ENCODE measurements at regions of chr12 and their contacts with region 1.

Region 1: DNA sequence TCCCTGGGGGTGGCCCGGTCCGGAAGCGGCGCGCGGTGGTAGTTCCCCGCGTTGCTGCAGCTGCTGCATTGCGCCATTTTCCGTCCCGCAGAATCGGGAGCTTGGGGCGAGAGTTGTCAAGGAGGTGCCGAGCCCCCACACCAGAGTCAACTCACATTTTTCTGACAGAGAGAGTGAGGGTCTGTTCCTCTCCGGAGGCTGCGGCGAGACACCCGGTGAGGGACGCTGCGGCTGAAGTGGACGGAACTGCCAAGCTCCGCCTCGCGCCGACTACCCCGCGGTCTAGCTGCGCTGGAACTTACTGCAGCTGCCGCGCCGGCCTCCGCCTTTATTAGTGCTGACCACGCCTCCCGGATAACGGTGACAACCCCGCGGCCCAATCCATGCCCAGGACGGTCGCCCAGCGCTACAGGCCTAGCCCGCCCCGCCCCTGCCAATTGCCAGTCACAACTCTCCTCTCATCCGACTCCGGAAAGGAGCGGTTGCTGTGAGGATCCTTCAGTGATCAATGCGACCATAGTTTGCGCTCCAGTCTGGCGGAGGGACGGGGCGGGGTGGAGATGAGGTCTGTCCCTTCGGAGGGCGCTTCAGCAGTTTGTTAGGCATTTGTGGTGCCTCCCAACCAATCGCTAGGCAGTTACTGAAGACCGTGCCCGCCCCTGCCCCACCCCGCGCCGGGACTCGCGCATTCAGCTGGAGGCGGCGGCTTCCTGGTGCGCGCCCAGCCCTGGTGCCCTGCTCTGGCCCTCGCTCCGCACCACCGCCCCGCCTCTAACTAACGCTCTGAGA is at the start of gene VAMP1:
- DNase-seq: peak; percentile 96
- ATAC-seq: peak; percentile 93
- H3K4me3 Mint-ChIP-seq: peak within 1 kb of the TSS; percentile 92
- H3K27ac Mint-ChIP-seq: peak within 1 kb of the TSS; percentile 94
- H3K4me1 Mint-ChIP-seq: peaks cover 48% of the 10 kb centered on the region
- H3K27me3 Mint-ChIP-seq: no peaks in the 10 kb centered on the region
- CTCF ChIP-seq: no peak
- total RNA-seq, gene VAMP1: 32.9 and 34.5 TPM in 2 replicates

Region 2: GRCh38 chr12:6020926-6021325 is 449.6 kb before region 1 on chr12:
- CTCF ChIA-PET with region 1: no interaction called
- POLR2A ChIA-PET with region 1: no interaction called
- intact Hi-C with region 1: no loop called
- DNase-seq: no peak
- ATAC-seq: no peak
- H3K4me3 Mint-ChIP-seq: no peak overlapping the region
- H3K27ac Mint-ChIP-seq: no peak overlapping the region
- H3K4me1 Mint-ChIP-seq: no peaks in the 10 kb centered on the region
- H3K27me3 Mint-ChIP-seq: peaks cover 12% of the 10 kb centered on the region
- CTCF ChIP-seq: no peak

Region 3: GRCh38 chr12:6195665-6196535 is 274.7 kb before region 1 on chr12:
- CTCF ChIA-PET with region 1: interaction called, 10 read pairs
- POLR2A ChIA-PET with region 1: no interaction called
- intact Hi-C with region 1: no loop called
- DNase-seq: peak; percentile 66
- ATAC-seq: peak; percentile 77
- H3K4me3 Mint-ChIP-seq: no peak overlapping the region
- H3K27ac Mint-ChIP-seq: no peak overlapping the region
- H3K4me1 Mint-ChIP-seq: peaks cover 24% of the 10 kb centered on the region
- H3K27me3 Mint-ChIP-seq: peaks cover 41% of the 10 kb centered on the region
- CTCF ChIP-seq: peak; percentile 45

Region 4: GRCh38 chr12:6335451-6336078 is 135.0 kb before region 1 on chr12:
- CTCF ChIA-PET with region 1: no interaction called
- POLR2A ChIA-PET with region 1: interaction called, 4 read pairs
- intact Hi-C with region 1: loop called (anchors 5 kb)
- DNase-seq: no peak
- ATAC-seq: peak; percentile 83
- H3K4me3 Mint-ChIP-seq: peak overlapping the region; percentile 29
- H3K27ac Mint-ChIP-seq: no peak overlapping the region
- H3K4me1 Mint-ChIP-seq: peaks cover 5% of the 10 kb centered on the region
- H3K27me3 Mint-ChIP-seq: peaks cover 44% of the 10 kb centered on the region
- CTCF ChIP-seq: no peak

Region 5: GRCh38 chr12:6430124-6430989 is 40.2 kb before region 1 on chr12:
- CTCF ChIA-PET with region 1: interaction called, 276 read pairs
- POLR2A ChIA-PET with region 1: interaction called, 200 read pairs
- intact Hi-C with region 1: loop called (anchors 1 kb)
- DNase-seq: no peak
- ATAC-seq: no peak
- H3K4me3 Mint-ChIP-seq: peak overlapping the region; percentile 58
- H3K27ac Mint-ChIP-seq: peak overlapping the region; percentile 65
- H3K4me1 Mint-ChIP-seq: peaks cover 72% of the 10 kb centered on the region
- H3K27me3 Mint-ChIP-seq: no peaks in the 10 kb centered on the region
- CTCF ChIP-seq: no peak

Region 6: DNA sequence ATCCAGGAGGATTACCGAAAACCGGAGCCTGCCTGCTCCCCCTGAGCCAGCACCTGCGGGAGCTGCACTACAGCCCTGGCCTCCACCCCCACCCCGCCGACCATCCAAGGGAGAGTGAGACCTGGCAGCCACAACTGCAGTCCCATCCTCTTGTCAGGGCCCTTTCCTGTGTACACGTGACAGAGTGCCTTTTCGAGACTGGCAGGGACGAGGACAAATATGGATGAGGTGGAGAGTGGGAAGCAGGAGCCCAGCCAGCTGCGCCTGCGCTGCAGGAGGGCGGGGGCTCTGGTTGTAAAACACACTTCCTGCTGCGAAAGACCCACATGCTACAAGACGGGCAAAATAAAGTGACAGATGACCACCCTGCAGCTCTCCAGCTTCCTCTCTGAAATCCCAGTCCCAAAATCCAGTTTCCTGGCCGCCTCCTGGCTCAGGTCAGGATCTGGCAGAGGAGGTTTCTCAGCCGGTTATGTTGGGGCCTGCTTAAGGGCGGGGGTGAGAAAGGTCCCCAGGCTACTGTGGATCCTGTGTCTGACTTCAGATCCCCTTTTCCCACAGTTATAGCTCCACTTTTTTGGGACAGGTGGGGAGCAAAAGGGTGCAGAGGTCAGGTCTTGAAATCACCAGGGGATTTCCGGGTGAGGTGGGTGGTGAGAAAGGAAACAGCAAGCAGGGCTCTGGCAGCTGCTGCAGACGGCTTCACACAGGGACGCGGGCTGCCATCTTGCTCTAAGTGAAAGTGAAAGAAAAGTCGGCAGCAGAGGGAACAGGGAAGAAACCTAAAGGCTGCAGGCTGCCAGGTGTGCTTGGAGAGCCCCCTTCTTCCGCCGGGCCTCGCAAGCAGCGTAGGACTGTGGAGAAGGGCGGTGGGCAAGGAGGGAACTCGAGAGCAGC is 19.0 kb before region 1 on chr12 and contains the start of gene TAPBPL:
- CTCF ChIA-PET with region 1: interaction called, 24 read pairs
- POLR2A ChIA-PET with region 1: interaction called, 173 read pairs
- intact Hi-C with region 1: no loop called
- DNase-seq: peak; percentile 62
- ATAC-seq: peak; percentile 86
- H3K4me3 Mint-ChIP-seq: peak within 1 kb of the TSS; percentile 97
- H3K27ac Mint-ChIP-seq: peak within 1 kb of the TSS; percentile 99
- H3K4me1 Mint-ChIP-seq: peaks cover 58% of the 10 kb centered on the region
- H3K27me3 Mint-ChIP-seq: no peaks in the 10 kb centered on the region
- CTCF ChIP-seq: no peak
- total RNA-seq, gene TAPBPL: 52.5 and 64.0 TPM in 2 replicates

Region 7: DNA sequence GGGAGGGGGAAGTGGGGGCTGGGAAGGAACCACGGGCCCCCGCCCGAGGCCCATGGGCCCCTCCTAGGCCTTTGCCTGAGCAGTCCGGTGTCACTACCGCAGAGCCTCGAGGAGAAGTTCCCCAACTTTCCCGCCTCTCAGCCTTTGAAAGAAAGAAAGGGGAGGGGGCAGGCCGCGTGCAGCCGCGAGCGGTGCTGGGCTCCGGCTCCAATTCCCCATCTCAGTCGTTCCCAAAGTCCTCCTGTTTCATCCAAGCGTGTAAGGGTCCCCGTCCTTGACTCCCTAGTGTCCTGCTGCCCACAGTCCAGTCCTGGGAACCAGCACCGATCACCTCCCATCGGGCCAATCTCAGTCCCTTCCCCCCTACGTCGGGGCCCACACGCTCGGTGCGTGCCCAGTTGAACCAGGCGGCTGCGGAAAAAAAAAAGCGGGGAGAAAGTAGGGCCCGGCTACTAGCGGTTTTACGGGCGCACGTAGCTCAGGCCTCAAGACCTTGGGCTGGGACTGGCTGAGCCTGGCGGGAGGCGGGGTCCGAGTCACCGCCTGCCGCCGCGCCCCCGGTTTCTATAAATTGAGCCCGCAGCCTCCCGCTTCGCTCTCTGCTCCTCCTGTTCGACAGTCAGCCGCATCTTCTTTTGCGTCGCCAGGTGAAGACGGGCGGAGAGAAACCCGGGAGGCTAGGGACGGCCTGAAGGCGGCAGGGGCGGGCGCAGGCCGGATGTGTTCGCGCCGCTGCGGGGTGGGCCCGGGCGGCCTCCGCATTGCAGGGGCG is 63.5 kb after region 1 on chr12 and contains the start of gene GAPDH:
- CTCF ChIA-PET with region 1: interaction called, 43 read pairs
- POLR2A ChIA-PET with region 1: interaction called, 46 read pairs
- intact Hi-C with region 1: loop called (anchors 1 kb)
- DNase-seq: peak; percentile 75
- ATAC-seq: peak; percentile 70
- H3K4me3 Mint-ChIP-seq: peak within 1 kb of the TSS; percentile 94
- H3K27ac Mint-ChIP-seq: peak within 1 kb of the TSS; percentile 93
- H3K4me1 Mint-ChIP-seq: peaks cover 47% of the 10 kb centered on the region
- H3K27me3 Mint-ChIP-seq: no peaks in the 10 kb centered on the region
- CTCF ChIP-seq: no peak
- total RNA-seq, gene GAPDH: 1,003 and 1,033 TPM in 2 replicates

Region 8: DNA sequence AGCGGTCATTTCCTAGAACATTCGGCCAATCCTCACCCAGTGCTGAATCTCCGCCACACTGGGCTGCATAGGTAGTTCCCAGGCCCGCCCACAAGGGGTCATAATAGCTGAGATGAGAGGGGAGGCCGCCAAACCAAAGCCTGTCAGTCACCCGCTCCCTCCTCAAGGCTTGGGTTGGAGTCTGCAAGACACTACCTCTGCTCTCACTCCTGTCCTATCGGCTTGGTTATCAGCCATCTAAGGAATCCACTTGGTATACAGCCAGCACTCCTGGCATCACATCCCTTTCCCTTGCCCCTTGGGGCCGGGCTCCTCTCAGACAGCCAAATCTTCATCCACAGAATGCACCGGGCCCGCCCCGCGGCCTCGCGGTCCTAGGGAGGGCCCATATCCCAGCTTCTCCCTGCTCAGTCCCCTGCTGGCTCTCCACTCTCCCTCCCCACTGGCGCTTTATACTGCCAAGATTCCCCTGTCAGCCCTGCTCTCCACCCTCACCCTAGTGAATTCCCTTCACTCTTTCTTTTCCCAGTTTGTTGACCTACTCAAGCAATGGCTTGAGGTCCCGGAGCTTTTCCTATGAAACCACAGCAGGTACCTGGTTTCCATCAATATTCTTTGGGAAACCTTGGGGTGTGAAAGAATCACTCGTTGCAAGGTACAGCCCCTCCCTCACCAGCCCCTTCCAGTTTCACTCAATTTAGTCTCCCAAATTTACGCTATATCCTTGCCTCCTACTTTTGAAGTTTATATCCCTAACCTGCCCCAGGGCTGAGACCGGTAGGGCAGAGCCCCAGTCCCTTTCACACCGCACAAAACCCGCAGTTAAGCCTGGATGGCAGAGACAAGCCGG is 83.8 kb after region 1 on chr12:
- CTCF ChIA-PET with region 1: interaction called, 3 read pairs
- POLR2A ChIA-PET with region 1: interaction called, 3 read pairs
- intact Hi-C with region 1: loop called (anchors 1 kb)
- DNase-seq: peak; percentile 61
- ATAC-seq: peak; percentile 77
- H3K4me3 Mint-ChIP-seq: peak overlapping the region; percentile 84
- H3K27ac Mint-ChIP-seq: peak overlapping the region; percentile 70
- H3K4me1 Mint-ChIP-seq: peaks cover 45% of the 10 kb centered on the region
- H3K27me3 Mint-ChIP-seq: no peaks in the 10 kb centered on the region
- CTCF ChIP-seq: peak; percentile 43